ENCODE measurements at regions of chr17 and their contacts with region 1.

Region 1: GRCh38 chr17:7823581-7824397 is 10.2 kb upstream of the KDM6B start:
- DNase-seq: no peak
- ATAC-seq: no peak
- H3K4me3 ChIP-seq: no peak overlapping the region
- H3K27ac ChIP-seq: no peak overlapping the region
- H3K4me1 ChIP-seq: no peaks in the 10 kb centered on the region
- H3K27me3 ChIP-seq: no peaks in the 10 kb centered on the region

Region 2: DNA sequence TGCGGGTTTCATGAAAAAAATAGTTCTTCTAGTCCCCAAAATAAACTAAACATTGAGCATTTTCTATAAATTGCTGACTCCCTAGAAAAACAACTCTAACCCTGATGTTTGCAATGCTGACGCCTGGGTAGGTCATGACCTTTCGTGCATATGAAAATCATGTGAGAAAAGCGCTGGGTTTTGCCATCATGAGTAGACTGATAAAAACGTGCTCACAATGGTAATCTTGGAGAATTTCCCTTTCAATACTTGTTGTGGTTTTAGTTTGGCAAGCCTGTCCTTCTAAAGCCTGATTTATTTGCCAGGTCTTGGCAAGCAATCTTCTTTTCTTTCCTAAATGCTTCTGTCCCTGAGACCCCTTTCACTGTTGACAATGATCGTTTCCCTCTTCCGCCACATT is 739.7 kb before region 1 on chr17:
- intact Hi-C with region 1: no loop called
- DNase-seq: no peak
- ATAC-seq: no peak
- H3K4me3 ChIP-seq: no peak overlapping the region
- H3K27ac ChIP-seq: no peak overlapping the region
- H3K4me1 ChIP-seq: no peaks in the 10 kb centered on the region
- H3K27me3 ChIP-seq: no peaks in the 10 kb centered on the region

Region 3: GRCh38 chr17:7740481-7741001 is 83.2 kb before region 1 on chr17:
- intact Hi-C with region 1: loop called in 1 of 4 experiments (anchors 5 kb)
- DNase-seq: peak; percentile 34 to 73 (median 63)
- ATAC-seq: no peak
- H3K4me3 ChIP-seq: no peak overlapping the region
- H3K27ac ChIP-seq: no peak overlapping the region
- H3K4me1 ChIP-seq: no peaks in the 10 kb centered on the region
- H3K27me3 ChIP-seq: no peaks in the 10 kb centered on the region

Region 4: DNA sequence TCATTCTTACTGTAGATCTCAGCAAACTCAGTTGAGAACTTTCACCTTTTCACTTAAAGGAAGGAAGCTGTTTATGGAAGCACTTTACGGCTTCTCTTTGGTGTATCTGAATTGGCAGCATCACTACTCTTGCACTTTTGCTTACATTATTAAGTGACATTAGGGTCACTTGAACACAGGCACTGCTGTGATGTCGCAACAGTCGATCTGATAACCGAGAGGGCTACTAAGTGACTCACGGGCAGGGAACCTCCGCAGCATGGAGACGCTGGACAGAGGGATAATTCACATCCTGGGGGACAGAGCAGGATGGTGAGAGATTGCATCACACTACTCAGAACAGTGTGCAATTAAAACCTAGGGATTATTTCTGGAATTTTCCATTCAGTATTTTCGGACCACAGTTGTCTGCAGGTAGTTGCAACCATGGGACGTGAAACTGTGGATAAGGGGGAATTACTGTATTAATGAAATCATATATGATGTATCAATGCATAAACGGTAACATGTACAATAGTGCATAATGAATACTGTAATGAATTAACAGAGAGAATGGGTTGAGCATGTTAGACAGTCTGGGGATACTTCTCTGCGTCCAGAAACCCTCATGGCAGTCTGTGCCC is 49.6 kb before region 1 on chr17:
- intact Hi-C with region 1: no loop called
- DNase-seq: no peak
- ATAC-seq: no peak
- H3K4me3 ChIP-seq: no peak overlapping the region
- H3K27ac ChIP-seq: no peak overlapping the region
- H3K4me1 ChIP-seq: no peaks in the 10 kb centered on the region
- H3K27me3 ChIP-seq: no peaks in the 10 kb centered on the region

Region 5: DNA sequence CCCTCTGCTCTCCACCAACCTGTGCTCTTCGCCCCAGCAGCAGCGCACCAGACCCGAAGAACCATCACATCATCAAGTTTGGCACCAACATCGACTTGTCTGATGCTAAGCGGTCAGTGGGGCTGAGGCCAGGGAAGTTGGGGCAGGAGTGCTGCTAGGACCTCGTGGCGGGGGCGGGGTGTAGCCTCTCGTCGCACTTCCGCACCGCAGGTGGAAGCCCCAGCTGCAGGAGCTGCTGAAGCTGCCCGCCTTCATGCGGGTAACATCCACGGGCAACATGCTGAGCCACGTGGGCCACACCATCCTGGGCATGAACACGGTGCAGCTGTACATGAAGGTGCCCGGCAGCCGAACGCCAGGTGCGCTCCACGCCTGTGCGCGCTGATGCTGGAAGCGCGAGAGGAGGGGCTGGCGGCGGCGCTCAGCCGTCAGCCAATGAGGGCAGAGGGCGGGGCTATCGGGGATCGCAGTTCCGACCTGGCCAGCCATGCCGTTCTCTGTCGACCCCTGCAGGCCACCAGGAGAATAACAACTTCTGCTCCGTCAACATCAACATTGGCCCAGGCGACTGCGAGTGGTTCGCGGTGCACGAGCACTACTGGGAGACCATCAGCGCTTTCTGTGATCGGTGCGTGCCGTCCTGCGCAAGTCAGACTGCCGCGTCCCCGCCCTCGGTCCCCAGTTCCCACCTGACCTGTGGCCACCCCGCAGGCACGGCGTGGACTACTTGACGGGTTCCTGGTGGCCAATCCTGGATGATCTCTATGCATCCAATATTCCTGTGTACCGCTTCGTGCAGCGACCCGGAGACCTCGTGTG is 27.9 kb after region 1 on chr17:
- intact Hi-C with region 1: loop called in 1 of 4 experiments (anchors 2 kb)
- DNase-seq: peak; percentile 92 to 96 (median 95)
- ATAC-seq: peak; percentile 65 to 67
- H3K4me3 ChIP-seq: no peak overlapping the region
- H3K27ac ChIP-seq: no peak overlapping the region
- H3K4me1 ChIP-seq: peaks cover 6% of the 10 kb centered on the region
- H3K27me3 ChIP-seq: no peaks in the 10 kb centered on the region

Measured in right cardiac atrium (tissue), 5 donors.